Tibial artery (tissue), 4 donors: ENCODE measurements at regions of chr1 and their contacts with region 1.

Region 1: GRCh38 chr1:78145105-78145580 is 99.4 kb downstream of the GIPC2 start:
- DNase-seq: peak in 1 of 2 donors; percentile 45
- H3K4me3 ChIP-seq: no peak overlapping the region
- H3K27ac ChIP-seq: no peak overlapping the region
- H3K4me1 ChIP-seq: no peaks in the 10 kb centered on the region
- H3K27me3 ChIP-seq: peaks cover 0 to 3% of the 10 kb centered on the region in 2 donors
- CTCF ChIP-seq: peak; percentile 66 to 75

Region 2: GRCh38 chr1:78603206-78603605 is 458.1 kb after region 1 on chr1:
- intact Hi-C with region 1: loop called (anchors 5 kb)
- DNase-seq: no peak
- H3K4me3 ChIP-seq: no peak overlapping the region
- H3K27ac ChIP-seq: no peak overlapping the region
- H3K4me1 ChIP-seq: no peaks in the 10 kb centered on the region
- H3K27me3 ChIP-seq: peaks cover 0 to 7% of the 10 kb centered on the region in 2 donors
- CTCF ChIP-seq: no peak